Lower leg skin (tissue), 4 donors: ENCODE measurements at regions of chr7 and their contacts with region 1.

Region 1: GRCh38 chr7:17075601-17076255 is 193.9 kb upstream of the AGR3 start:
- DNase-seq: no peak
- H3K4me3 ChIP-seq: no peak overlapping the region
- CTCF ChIP-seq: no peak
- POLR2A ChIP-seq: no peak

Region 2: DNA sequence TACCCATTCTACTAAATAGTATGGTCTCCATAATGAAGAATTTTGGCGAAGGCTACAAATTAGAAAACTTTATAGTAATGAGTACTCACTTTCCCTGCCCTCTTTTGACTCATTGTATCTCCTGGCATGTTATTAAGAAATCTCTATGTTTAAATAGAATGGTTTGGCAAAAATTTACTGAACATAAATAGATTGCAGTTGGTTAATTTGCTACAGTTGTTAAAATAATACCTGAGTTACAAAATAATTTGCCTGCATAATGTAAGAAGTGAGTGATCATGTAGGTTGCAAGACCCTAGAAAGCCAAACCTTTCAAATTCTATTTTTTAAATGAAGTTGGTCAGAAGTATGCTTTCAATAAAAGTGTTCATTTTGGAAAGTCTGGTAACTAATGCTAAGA is 45.9 kb after region 1 on chr7:
- intact Hi-C with region 1: loop called (anchors 1 kb)
- DNase-seq: no peak
- H3K4me3 ChIP-seq: no peak overlapping the region
- CTCF ChIP-seq: no peak
- POLR2A ChIP-seq: no peak